Activated CD4-positive, alpha-beta memory T cell treated with anti-CD3 and anti-CD28 coated beads for 36 hours (primary cell): ENCODE measurements at regions of chr9 and their contacts with region 1.

Region 1: DNA sequence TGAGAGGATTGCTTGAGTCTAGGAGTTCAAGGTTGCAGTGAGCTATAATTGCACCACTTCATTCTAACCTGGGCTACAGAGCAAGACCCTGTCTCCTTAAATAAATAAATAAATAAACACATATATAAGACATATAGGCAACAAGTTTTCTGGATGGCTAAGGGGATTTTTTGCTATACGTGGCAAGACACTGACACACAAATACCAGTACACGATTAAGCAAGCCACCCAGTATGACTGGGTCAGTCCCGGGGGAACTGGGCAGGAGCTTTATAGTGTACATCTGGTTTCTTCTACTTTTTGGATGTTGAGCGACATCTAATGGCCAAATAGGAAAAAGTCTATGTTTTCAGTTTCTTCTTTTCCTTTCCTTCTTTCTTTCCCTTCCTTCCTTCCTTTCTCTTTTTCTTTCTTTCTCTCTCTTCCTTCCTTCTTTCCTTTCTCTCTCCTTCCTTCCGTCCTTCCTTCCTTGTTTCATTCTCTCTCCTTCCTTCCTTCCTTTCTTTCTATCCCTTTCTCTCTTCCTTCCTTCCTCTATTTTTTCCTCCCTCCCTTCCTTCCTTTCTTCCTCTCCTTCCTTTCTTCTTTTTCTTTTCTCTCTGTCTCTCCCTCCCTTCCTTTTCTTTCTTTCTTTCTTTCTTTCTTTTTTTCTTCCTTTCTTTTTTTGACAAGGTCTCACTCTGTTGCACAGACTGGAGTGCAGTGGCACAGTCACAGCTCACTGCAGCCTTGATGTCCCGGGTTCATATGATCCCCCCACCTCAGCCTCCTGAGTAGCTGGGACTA is 47.0 kb upstream of the PLIN2 start:
- DNase-seq: peak; percentile 79
- H3K4me3 Mint-ChIP-seq: no peak overlapping the region
- H3K27ac Mint-ChIP-seq: no peak overlapping the region
- H3K4me1 Mint-ChIP-seq: peaks cover 22% of the 10 kb centered on the region
- H3K27me3 Mint-ChIP-seq: no peaks in the 10 kb centered on the region

Region 2: GRCh38 chr9:19085295-19085694 is 89.0 kb before region 1 on chr9:
- CTCF ChIA-PET with region 1: interaction called, 67 read pairs
- POLR2A ChIA-PET with region 1: no interaction called
- intact Hi-C with region 1: loop called (anchors 1 kb)
- DNase-seq: no peak
- H3K4me3 Mint-ChIP-seq: no peak overlapping the region
- H3K27ac Mint-ChIP-seq: no peak overlapping the region
- H3K4me1 Mint-ChIP-seq: no peaks in the 10 kb centered on the region
- H3K27me3 Mint-ChIP-seq: no peaks in the 10 kb centered on the region

Region 3: DNA sequence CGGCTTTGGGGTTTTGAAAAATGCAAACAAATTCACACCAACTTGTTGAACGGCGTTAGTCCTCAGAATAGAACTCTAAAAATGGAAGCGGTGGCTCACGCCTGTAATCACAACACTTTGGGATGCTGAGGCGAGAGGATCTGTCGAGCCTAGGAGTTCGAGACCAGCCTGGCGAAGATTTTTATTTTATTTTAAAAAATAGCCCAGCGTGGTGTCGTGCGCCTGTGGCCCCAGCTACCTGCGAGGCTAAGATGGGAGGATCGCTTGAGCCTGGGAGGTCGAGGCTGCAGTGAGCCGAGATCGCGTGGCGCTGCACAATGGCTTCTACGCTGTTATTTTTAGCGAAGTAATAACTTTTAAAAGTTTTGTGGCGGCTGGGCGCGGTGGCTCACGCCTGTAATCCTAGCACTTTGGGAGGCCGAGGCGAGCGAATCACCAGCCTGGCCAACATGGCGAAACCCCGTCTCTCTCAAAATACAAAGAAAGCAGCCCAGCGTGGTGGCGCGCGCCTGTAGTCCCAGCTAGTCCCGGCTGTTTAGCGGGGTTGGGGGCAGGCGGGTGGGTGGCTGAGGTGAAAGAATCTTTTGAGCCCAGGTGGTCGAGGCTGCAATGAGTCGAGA is 46.3 kb before region 1 on chr9:
- CTCF ChIA-PET with region 1: interaction called, 10 read pairs
- POLR2A ChIA-PET with region 1: no interaction called
- intact Hi-C with region 1: loop called (anchors 1 kb)
- DNase-seq: peak; percentile 48
- H3K4me3 Mint-ChIP-seq: peak overlapping the region; percentile 93
- H3K27ac Mint-ChIP-seq: peak overlapping the region; percentile 97
- H3K4me1 Mint-ChIP-seq: peaks cover 56% of the 10 kb centered on the region
- H3K27me3 Mint-ChIP-seq: no peaks in the 10 kb centered on the region

Region 4: DNA sequence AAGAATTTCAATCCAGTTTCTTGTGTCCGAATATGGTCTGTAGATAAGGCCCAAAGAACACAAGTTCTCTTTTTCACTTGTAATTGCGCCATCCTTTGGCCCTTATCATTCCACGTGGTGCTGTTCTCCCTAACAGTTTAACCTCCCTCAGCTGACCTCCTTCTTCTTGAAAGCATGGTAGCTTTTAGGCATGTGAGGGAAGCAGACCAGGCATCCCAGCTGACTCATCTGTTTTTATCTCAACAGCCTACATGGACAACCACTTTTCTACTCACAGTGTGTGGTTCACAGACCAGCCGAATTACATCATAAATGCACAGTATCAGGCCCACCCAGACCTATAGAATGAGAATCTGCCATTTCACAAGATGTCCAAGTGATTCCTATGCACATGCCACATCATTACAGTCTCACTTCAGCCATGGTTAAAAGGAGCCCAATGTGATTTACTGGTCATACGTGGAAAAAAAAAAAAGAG is 20.1 kb before region 1 on chr9:
- CTCF ChIA-PET with region 1: interaction called, 15 read pairs
- POLR2A ChIA-PET with region 1: interaction called, 5 read pairs
- intact Hi-C with region 1: no loop called
- DNase-seq: peak; percentile 18
- H3K4me3 Mint-ChIP-seq: no peak overlapping the region
- H3K27ac Mint-ChIP-seq: no peak overlapping the region
- H3K4me1 Mint-ChIP-seq: peaks cover 36% of the 10 kb centered on the region
- H3K27me3 Mint-ChIP-seq: no peaks in the 10 kb centered on the region

Region 5: DNA sequence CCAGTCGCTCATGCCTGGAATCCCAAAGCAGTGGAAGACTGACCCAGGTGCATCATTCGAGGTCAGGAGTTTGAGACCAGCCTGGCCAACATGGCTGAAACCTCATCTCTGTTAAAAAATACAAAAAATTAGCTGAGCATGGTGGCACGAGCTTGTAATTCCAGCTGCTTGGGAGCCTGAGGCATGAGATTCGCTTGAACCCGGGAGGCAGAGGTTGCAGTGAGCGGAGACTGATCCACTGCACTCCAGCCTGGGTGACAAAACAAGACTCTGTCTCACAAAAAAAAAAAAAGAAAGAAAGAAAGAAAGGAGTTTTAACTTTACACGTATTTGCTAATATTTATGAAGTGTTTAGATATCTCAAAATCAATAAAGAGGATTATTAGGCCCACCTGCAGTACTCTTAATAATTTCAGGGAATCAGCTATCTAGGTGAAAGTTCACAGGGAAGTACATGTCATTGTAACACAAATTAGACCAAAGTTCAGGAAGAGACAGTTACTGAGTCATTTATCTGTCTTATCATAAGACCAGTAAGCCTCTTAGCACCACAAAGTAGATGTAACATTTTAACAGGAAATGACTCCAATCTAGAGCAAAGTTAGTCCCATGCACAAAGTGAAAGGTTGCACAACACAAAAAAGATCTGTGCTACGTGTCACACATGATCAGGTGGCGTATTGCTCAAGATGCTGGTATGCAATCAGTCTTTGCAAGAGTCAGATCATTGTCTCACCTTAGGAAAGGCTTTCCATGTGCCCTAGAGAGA is 12.9 kb before region 1 on chr9:
- CTCF ChIA-PET with region 1: interaction called, 18 read pairs
- POLR2A ChIA-PET with region 1: no interaction called
- intact Hi-C with region 1: loop called (anchors 1 kb)
- DNase-seq: peak; percentile 73
- H3K4me3 Mint-ChIP-seq: peak overlapping the region; percentile 14
- H3K27ac Mint-ChIP-seq: peak overlapping the region; percentile 76
- H3K4me1 Mint-ChIP-seq: peaks cover 19% of the 10 kb centered on the region
- H3K27me3 Mint-ChIP-seq: no peaks in the 10 kb centered on the region